AG04449 (cell line): ENCODE measurements at regions of chr20 and their contacts with region 1.

Region 1: GRCh38 chr20:56358596-56359211 is at the start of gene FAM210B:
- DNase-seq: no peak
- H3K4me3 ChIP-seq: peak within 1 kb of the TSS; percentile 83
- CTCF ChIP-seq: no peak

Region 2: DNA sequence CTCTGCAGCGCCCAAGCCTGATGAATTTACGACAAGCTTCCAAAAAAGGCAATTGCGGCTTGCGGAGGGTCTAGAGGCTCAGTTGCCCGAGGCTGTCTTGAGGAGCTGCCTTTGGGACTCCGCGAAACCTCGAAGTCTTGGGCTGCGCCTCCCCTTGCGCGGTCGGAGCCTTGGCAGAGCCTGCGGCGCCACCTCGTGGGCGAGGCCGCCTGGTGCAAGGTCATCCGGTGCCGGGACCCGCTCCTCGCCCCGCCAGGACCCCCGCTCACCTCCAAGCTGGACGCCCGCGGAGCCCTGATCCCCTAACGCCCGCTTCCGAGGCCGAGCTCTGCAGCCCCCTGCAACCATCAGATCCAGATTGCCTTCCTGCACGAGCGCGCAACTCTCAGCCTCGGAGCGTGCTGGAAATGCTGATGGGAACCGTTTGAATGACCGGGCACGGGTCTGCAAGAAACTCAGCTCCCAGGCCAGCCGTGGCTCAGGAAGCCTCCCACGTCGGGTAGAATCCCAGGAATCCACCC is 14.8 kb before region 1 on chr20:
- CTCF ChIA-PET with region 1: interaction called, 15 read pairs
- POLR2A ChIA-PET with region 1: no interaction called
- DNase-seq: no peak
- H3K4me3 ChIP-seq: peak overlapping the region; percentile 33
- CTCF ChIP-seq: peak; percentile 87

Region 3: DNA sequence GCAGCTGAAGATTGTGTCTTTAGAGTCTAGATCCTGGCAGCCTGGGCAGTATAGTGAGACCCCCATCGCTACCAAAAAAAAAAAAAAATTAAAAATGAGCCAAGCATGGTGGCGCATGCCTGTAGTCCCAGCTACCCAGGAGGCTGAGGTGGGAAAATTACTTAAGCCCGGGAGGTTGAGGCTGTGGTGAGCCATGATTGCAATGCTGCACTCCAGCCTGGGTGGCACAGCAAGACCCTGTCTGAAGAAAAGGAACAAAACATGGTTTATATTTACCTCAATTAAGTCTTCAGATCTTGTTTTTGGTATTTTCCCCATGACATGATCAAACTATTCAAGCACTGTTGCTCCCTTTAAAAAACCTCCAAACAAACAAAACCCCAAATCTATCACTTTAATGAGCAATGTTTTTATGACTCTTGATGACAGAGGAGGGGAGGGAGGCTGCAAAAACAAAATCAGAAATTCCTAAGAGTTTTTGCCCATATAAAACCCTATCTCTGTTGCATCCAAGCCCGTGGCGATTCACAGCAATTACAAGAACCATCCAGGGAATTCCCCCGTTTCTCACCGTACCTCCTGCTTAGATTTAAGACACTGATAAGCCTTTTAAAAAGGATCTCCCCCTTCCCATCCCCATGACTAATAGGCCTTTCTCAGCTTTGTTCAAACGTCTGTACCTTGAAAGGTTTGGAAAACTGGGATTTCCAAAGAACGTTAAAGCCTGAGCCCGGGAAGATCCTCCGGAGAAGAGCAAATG is 647.9 kb after region 1 on chr20:
- CTCF ChIA-PET with region 1: no interaction called
- POLR2A ChIA-PET with region 1: no interaction called
- DNase-seq: peak; percentile 16
- H3K4me3 ChIP-seq: no peak overlapping the region
- CTCF ChIP-seq: no peak